ENCODE measurements at regions of chr6 and their contacts with region 1.

Region 1: GRCh38 chr6:44265007-44265721 is at the start of gene NFKBIE:
- DNase-seq: peak; percentile 98
- H3K4me3 Mint-ChIP-seq: peak within 1 kb of the TSS; percentile 97
- H3K27ac Mint-ChIP-seq: peak within 1 kb of the TSS; percentile 94
- H3K4me1 Mint-ChIP-seq: peaks cover 49% of the 10 kb centered on the region
- H3K27me3 Mint-ChIP-seq: peaks cover 18% of the 10 kb centered on the region
- total RNA-seq, gene NFKBIE: 24.7 to 25.1 TPM

Region 2: DNA sequence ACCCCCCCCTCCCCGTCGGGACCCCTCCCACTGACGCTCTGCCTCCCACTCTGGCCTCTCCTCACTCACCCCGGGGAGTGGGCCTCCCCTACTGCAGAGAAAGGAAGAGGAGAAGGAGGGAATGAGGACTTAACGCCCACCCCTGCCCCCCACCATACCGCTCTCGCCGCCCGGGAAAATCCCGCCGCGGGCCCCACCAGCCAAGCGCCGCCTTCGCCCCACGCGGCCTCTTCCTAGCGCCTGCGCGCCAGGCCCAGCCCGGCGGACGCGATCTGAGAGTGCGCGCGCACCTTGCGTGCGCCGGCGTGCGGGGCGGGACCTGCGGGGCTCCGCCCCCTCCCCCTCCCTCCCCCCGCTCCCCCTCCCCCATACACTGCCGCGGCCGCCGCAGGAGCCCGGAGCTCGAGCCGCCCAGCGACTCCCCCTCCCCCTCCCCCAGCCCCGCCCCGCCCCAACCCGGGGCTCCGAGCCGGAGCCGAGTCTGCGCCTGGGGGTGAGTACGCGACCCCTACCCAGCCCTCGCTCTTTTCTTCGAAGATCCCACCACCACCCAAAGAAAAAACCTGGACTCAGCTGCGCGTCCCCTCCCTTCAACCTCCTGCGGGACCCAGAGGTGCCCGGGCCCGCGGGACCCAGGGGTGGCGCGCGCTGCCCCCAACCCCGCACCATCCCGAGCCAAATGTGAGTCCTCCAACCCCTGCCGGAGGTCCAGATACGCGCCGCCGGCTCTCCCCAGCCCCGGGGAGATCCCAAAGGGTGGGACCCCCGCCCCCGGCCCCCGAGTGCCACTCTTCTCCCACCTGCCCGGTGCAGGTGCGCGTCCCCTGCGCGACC is 137.8 kb before region 1 on chr6 and contains the starts of genes MRPL14 and TMEM63B:
- CTCF ChIA-PET with region 1: interaction called, 4 read pairs
- POLR2A ChIA-PET with region 1: no interaction called
- intact Hi-C with region 1: loop called (anchors 1 kb)
- DNase-seq: peak; percentile 93
- H3K4me3 Mint-ChIP-seq: peak within 1 kb of the TSS; percentile 92
- H3K27ac Mint-ChIP-seq: peak within 1 kb of the TSS; percentile 97
- H3K4me1 Mint-ChIP-seq: peaks cover 46% of the 10 kb centered on the region
- H3K27me3 Mint-ChIP-seq: no peaks in the 10 kb centered on the region
- total RNA-seq, gene MRPL14: 49.5 to 50.1 TPM
- total RNA-seq, gene TMEM63B: 11.6 to 13.0 TPM

Region 3: DNA sequence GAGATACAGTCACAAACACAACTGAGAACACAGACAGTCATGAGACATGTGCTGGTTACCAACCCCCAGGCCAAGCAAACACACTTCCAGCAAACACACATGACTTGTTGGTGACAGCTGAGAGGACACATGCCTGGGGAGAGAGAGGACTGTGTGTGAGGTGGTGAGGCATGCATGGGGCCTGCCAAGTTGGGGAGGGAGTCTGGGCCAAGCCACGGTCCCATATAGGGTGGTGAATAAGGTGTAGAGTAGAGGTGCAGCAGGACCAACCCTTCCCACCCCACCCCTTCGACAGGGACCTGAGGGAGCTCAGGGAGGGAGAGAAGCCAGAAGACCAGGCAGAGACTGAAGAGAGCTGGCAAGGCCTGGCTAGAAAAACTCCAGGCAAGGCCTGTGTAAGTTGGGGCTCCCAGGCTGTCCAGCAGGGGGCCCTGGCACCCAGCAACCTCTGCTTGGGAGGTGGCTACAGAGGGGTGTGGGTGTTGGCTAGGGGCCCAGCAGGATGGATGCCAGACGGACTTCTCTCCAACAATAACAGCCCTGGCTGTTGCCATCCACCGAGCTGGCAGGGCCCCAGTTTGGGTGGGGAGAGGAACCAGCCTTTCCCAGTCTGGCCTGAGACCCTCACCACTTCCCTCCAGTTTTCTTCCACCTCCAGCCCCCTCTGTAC is 43.7 kb before region 1 on chr6:
- CTCF ChIA-PET with region 1: interaction called, 9 read pairs
- POLR2A ChIA-PET with region 1: interaction called, 3 read pairs
- intact Hi-C with region 1: loop called (anchors 2 kb)
- DNase-seq: peak; percentile 88
- H3K4me3 Mint-ChIP-seq: no peak overlapping the region
- H3K27ac Mint-ChIP-seq: no peak overlapping the region
- H3K4me1 Mint-ChIP-seq: peaks cover 34% of the 10 kb centered on the region
- H3K27me3 Mint-ChIP-seq: peaks cover 9% of the 10 kb centered on the region

Region 4: DNA sequence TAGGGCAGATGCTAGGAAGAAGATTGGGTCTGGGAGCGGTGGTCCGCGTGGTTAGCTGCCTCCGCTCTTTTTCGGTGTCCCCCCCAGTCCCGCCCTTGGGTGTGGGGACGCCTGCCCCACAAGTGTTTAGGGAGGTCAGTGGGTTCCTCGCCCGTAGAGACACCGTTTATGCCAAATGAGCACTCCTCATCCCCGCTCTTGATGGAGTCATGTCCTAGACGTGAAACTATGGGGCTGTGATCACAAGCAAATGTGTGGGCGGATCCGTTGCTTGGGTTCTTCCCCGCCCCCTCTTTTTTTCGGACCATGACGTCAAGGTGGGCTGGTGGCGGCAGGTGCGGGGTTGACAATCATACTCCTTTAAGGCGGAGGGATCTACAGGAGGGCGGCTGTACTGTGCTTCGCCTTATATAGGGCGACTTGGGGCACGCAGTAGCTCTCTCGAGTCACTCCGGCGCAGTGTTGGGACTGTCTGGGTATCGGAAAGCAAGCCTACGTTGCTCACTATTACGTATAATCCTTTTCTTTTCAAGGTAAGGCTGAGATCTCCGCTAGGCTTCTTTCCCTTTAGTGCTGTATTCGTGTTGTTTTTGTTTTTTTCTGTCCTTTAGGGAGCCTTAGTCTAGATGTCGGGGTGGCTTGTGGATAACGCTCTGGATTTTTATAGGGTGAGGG is 18.4 kb before region 1 on chr6 and contains the start of gene HSP90AB1:
- CTCF ChIA-PET with region 1: interaction called, 11 read pairs
- POLR2A ChIA-PET with region 1: interaction called, 139 read pairs
- intact Hi-C with region 1: loop called (anchors 1 kb)
- DNase-seq: peak; percentile 99
- H3K4me3 Mint-ChIP-seq: peak within 1 kb of the TSS; percentile 96
- H3K27ac Mint-ChIP-seq: peak within 1 kb of the TSS; percentile 99
- H3K4me1 Mint-ChIP-seq: peaks cover 45% of the 10 kb centered on the region
- H3K27me3 Mint-ChIP-seq: peaks cover 4% of the 10 kb centered on the region
- total RNA-seq, gene HSP90AB1: 1,671 to 1,695 TPM

Region 5: GRCh38 chr6:44297063-44298038 is 32.2 kb after region 1 on chr6:
- CTCF ChIA-PET with region 1: interaction called, 29 read pairs
- POLR2A ChIA-PET with region 1: interaction called, 3 read pairs
- intact Hi-C with region 1: no loop called
- DNase-seq: peak; percentile 64
- H3K4me3 Mint-ChIP-seq: peak overlapping the region; percentile 53
- H3K27ac Mint-ChIP-seq: no peak overlapping the region
- H3K4me1 Mint-ChIP-seq: peaks cover 6% of the 10 kb centered on the region
- H3K27me3 Mint-ChIP-seq: peaks cover 34% of the 10 kb centered on the region

Region 6: GRCh38 chr6:44312901-44313788 is 48.0 kb after region 1 on chr6 and contains the start of gene AARS2:
- CTCF ChIA-PET with region 1: interaction called, 68 read pairs
- POLR2A ChIA-PET with region 1: interaction called, 3 read pairs
- intact Hi-C with region 1: loop called (anchors 2 kb)
- DNase-seq: peak; percentile 95
- H3K4me3 Mint-ChIP-seq: peak within 1 kb of the TSS; percentile 98
- H3K27ac Mint-ChIP-seq: peak within 1 kb of the TSS; percentile 89
- H3K4me1 Mint-ChIP-seq: peaks cover 20% of the 10 kb centered on the region
- H3K27me3 Mint-ChIP-seq: peaks cover 2% of the 10 kb centered on the region
- total RNA-seq, gene AARS2: 16.3 to 16.5 TPM

Region 7: GRCh38 chr6:44387346-44388133 is 122.4 kb after region 1 on chr6 and contains the start of gene CDC5L:
- CTCF ChIA-PET with region 1: interaction called, 3 read pairs
- POLR2A ChIA-PET with region 1: no interaction called
- intact Hi-C with region 1: loop called (anchors 1 kb)
- DNase-seq: peak; percentile 95
- H3K4me3 Mint-ChIP-seq: peak within 1 kb of the TSS; percentile 89
- H3K27ac Mint-ChIP-seq: peak within 1 kb of the TSS; percentile 94
- H3K4me1 Mint-ChIP-seq: peaks cover 31% of the 10 kb centered on the region
- H3K27me3 Mint-ChIP-seq: no peaks in the 10 kb centered on the region
- total RNA-seq, gene CDC5L: 24.0 to 24.3 TPM

Measured in activated CD4-positive, alpha-beta memory T cell treated with anti-CD3 and anti-CD28 coated beads for 36 hours (primary cell).